MCF 10A (cell line): ENCODE measurements at regions of chr10 and their contacts with region 1.

Region 1: DNA sequence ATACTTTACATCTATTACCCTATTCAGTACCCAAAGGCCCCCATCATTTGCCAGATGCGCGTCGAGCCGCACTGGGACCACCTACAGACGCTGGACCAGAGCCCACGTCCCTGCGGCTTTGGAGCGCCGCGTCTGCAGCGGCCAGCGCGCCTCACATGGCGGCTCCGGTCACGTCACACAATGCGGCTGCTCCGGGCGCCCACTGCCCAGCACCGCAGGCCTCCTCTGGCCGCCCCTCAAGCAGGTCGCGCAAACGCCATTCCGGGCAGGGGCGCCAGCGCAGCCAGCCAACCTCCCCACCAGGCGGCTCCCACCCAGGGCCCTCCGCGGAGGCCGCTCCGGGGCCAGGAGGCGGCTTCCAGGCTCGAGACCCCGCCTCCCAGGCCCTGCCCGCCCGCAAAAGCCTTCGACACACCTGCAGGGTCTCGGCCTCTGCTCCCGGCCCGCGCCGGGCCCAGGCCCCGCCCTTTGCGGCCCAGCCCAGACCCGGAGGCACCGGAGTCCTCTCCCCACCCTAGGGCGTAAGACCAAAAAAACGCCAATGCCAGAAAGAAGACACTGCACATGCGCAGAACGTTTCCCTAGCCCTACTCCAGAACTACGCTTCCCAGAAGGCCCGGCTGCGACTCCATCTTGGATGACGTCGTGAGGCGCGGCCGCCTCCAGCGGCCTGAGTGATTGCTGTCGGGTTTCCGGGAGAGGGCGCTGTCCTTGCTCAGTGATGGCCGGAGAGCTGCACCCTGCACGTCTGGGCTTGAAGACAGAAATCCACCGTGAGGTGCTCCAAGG is at the start of gene ZNF25:
- DNase-seq: peak; percentile 99
- H3K4me3 Mint-ChIP-seq: peak within 1 kb of the TSS; percentile 88
- H3K27ac Mint-ChIP-seq: peak within 1 kb of the TSS; percentile 94
- H3K4me1 Mint-ChIP-seq: peaks cover 6% of the 10 kb centered on the region
- H3K27me3 Mint-ChIP-seq: no peaks in the 10 kb centered on the region
- CTCF ChIP-seq: peak; percentile 89
- total RNA-seq, gene ZNF25: 7.2 TPM in 2 replicates

Region 2: GRCh38 chr10:37857287-37858211 is 118.7 kb before region 1 on chr10 and contains the start of gene ZNF248:
- CTCF ChIA-PET with region 1: no interaction called
- POLR2A ChIA-PET with region 1: interaction called, 26 read pairs
- intact Hi-C with region 1: loop called (anchors 5 kb)
- DNase-seq: peak; percentile 95
- H3K4me3 Mint-ChIP-seq: peak within 1 kb of the TSS; percentile 78
- H3K27ac Mint-ChIP-seq: peak within 1 kb of the TSS; percentile 97
- H3K4me1 Mint-ChIP-seq: peaks cover 16% of the 10 kb centered on the region
- H3K27me3 Mint-ChIP-seq: no peaks in the 10 kb centered on the region
- CTCF ChIP-seq: no peak
- total RNA-seq, gene ZNF248: 5.7 and 10.0 TPM in 2 replicates

Region 3: GRCh38 chr10:37992083-37992482 is 15.8 kb after region 1 on chr10:
- CTCF ChIA-PET with region 1: interaction called, 19 read pairs
- POLR2A ChIA-PET with region 1: interaction called, 4 read pairs
- intact Hi-C with region 1: no loop called
- DNase-seq: no peak
- H3K4me3 Mint-ChIP-seq: no peak overlapping the region
- H3K27ac Mint-ChIP-seq: no peak overlapping the region
- H3K4me1 Mint-ChIP-seq: no peaks in the 10 kb centered on the region
- H3K27me3 Mint-ChIP-seq: no peaks in the 10 kb centered on the region
- CTCF ChIP-seq: no peak

Region 4: DNA sequence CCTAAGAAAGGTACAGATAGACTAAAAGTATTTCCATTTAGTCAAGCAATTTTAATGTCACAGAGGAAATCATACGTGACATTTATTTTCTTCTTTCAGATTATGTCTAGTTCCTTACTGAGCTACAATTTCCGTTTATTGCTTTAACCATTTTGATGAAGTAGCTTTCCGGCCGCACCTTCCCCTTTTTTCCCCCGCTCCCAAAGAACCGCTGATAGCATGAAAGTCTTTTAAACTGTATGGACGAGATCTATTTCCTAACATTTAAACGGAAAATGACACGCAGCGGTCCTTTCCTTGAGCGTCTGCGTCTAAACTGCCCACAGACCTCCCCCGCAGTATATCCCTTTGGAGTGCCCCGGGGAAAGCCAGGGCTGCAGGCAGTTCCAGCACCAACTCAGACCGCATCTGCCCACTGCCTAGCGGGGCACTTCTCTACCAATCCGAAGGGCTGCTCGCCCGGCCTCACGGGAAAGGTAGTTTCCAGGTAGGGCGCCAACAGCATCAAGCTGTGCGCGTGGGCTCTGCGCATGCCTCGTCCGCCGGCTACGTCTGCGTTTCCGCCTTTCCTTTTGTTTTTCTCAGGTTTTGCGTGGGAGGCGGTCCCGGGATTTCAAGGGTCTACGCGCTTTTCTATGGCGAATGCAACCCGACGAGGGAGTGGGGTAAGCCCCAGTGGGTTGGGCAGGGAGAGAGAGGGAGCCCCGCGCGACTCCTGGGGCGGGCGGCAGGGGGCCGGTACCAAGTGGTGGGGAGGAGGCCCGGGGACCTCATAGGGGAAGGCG is 34.0 kb after region 1 on chr10 and contains the start of gene ZNF33A:
- CTCF ChIA-PET with region 1: interaction called, 8 read pairs
- POLR2A ChIA-PET with region 1: interaction called, 52 read pairs
- intact Hi-C with region 1: loop called (anchors 1 kb)
- DNase-seq: peak; percentile 94
- H3K4me3 Mint-ChIP-seq: peak within 1 kb of the TSS; percentile 90
- H3K27ac Mint-ChIP-seq: peak within 1 kb of the TSS; percentile 99
- H3K4me1 Mint-ChIP-seq: no peaks in the 10 kb centered on the region
- H3K27me3 Mint-ChIP-seq: no peaks in the 10 kb centered on the region
- CTCF ChIP-seq: no peak
- total RNA-seq, gene ZNF33A: 20.7 and 23.5 TPM in 2 replicates

Region 5: DNA sequence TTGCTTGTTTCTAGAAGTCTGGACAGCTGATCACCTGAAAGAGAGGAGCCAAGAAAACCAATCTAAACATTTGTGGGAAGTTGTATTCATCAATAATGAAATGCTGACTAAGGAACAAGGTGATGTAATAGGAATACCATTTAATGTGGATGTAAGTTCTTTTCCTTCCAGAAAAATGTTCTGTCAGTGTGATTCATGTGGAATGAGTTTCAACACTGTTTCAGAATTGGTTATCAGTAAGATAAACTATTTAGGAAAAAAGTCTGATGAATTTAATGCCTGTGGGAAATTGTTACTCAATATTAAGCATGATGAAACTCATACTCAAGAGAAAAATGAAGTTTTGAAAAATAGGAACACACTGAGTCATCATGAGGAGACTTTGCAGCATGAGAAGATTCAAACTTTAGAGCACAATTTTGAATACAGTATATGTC is 78.1 kb after region 1 on chr10:
- CTCF ChIA-PET with region 1: interaction called, 3 read pairs
- POLR2A ChIA-PET with region 1: no interaction called
- intact Hi-C with region 1: loop called (anchors 2 kb)
- DNase-seq: peak; percentile 53
- H3K4me3 Mint-ChIP-seq: peak overlapping the region; percentile 26
- H3K27ac Mint-ChIP-seq: peak overlapping the region; percentile 69
- H3K4me1 Mint-ChIP-seq: peaks cover 14% of the 10 kb centered on the region
- H3K27me3 Mint-ChIP-seq: no peaks in the 10 kb centered on the region
- CTCF ChIP-seq: no peak

Region 6: GRCh38 chr10:38094158-38094920 is 118.1 kb after region 1 on chr10 and contains the start of gene ZNF37A:
- CTCF ChIA-PET with region 1: interaction called, 6 read pairs
- POLR2A ChIA-PET with region 1: interaction called, 3 read pairs
- intact Hi-C with region 1: loop called (anchors 1 kb)
- DNase-seq: peak; percentile 98
- H3K4me3 Mint-ChIP-seq: peak within 1 kb of the TSS; percentile 80
- H3K27ac Mint-ChIP-seq: peak within 1 kb of the TSS; percentile 96
- H3K4me1 Mint-ChIP-seq: peaks cover 5% of the 10 kb centered on the region
- H3K27me3 Mint-ChIP-seq: no peaks in the 10 kb centered on the region
- CTCF ChIP-seq: no peak
- total RNA-seq, gene ZNF37A: 44.5 and 52.3 TPM in 2 replicates

Region 7: GRCh38 chr10:38118072-38118807 is 142.0 kb after region 1 on chr10:
- CTCF ChIA-PET with region 1: no interaction called
- POLR2A ChIA-PET with region 1: no interaction called
- intact Hi-C with region 1: no loop called
- DNase-seq: peak; percentile 27
- H3K4me3 Mint-ChIP-seq: no peak overlapping the region
- H3K27ac Mint-ChIP-seq: no peak overlapping the region
- H3K4me1 Mint-ChIP-seq: no peaks in the 10 kb centered on the region
- H3K27me3 Mint-ChIP-seq: no peaks in the 10 kb centered on the region
- CTCF ChIP-seq: no peak